ENCODE measurements at regions of chr7 and their contacts with region 1.

Region 1: GRCh38 chr7:32957326-32958045 is at the start of gene FKBP9:
- DNase-seq: peak; percentile 91
- ATAC-seq: peak; percentile 97
- total RNA-seq, gene FKBP9: 124 TPM

Region 2: GRCh38 chr7:32490127-32490822 is 467.2 kb before region 1 on chr7 and contains the start of gene LSM5:
- intact Hi-C with region 1: loop called (anchors 5 kb)
- DNase-seq: peak; percentile 95
- ATAC-seq: peak; percentile 88
- total RNA-seq, gene LSM5: 39.2 TPM

Region 3: DNA sequence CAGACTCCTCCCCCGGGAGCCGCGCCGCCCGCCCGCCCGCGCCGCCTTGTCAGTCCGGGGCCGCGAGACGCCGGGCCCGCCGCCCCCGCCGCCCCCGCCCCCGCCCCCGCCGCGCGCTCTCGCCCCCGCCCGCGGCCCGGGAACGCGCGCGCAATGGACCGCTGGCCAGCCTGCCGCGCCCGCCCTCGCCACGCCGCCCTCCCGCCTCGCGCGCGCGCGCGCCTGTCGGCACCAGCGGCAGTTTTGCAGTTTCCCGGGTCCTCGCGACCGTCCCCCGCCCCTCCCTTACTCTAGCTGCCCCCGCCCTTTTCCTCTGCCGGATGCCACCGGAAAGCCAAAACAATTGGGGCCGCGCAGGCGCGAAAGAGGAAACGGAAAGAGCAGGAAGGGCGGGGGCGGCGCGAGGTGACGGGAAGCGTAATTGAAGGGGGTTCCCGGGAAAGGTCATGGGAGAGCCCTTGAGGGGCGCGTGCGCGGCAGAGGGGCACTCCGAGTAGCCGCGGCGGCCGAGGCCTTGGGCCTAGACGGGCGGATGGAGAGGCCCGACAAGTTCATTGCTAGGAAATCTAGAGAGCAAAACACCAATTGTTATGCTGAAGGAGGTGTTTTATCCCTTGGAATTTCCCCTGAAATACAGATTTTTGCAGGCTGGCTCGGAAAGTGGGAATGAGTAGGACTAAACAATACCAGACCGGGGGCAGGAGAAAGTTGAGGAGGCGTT is 65.5 kb before region 1 on chr7:
- intact Hi-C with region 1: loop called (anchors 5 kb)
- DNase-seq: peak; percentile 99
- ATAC-seq: peak; percentile 89

Region 4: DNA sequence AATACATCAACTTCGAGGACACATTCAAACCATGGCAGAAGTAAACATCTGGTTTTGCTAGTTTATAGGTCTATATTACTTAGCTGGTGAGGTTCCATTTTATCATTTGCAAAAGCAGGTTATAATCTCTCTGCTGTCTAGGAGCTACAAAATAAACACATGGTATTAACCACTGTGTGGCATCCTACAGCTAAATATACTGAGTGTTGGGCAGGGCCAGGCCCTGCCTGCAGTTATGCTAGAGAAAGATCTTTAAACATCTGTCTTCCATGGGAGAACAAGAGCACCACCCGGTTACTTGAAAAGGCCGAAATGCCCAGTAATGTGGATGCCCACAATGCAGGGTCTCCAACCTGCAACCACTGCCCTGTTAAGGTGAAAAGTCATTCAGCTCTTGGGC is 20.8 kb before region 1 on chr7:
- intact Hi-C with region 1: no loop called
- DNase-seq: no peak
- ATAC-seq: peak; percentile 57

Region 5: DNA sequence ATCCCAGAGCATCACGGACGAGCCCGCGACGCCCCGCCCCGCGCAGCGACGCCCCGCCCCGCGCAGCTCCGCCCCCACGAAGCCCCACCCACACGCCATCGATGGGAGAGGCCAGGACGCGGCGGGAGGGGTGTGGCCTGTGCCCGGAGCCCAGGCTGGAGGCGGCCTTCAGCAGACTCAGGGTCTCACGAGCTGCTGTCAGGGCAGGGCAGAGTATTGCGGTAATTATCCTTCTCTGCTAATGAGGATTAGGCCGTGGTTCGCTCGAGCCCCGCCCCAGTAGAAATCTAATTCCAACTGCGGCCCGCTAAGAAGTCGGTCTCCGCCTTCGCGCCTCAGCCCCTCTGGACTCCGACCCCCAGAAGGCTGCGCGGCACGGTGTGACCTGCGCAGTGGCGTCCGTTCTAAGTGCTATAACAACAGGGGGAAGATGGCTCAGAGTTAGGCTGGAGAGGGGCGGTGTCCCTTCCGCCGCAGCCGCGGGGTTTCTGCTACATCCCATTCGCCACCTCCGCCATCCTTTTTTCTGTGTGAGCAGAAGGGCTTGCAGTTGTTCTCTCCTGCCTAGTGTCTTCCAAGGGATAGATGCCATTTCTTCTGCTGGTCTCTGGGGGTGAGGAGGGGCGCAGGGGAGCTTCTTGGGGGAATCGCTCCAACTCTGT is 105.4 kb after region 1 on chr7:
- intact Hi-C with region 1: loop called (anchors 5 kb)
- DNase-seq: peak; percentile 96
- ATAC-seq: peak; percentile 99